ENCODE measurements at regions of chr2 and their contacts with region 1.

Region 1: GRCh38 chr2:181715033-181715630 is 34.8 kb upstream of the NEUROD1 start:
- DNase-seq: peak; percentile 70 to 74
- H3K4me3 ChIP-seq: no peak overlapping the region
- H3K27ac ChIP-seq: no peak overlapping the region
- H3K4me1 ChIP-seq: no peaks in the 10 kb centered on the region
- H3K27me3 ChIP-seq: no peaks in the 10 kb centered on the region
- CTCF ChIP-seq: peak; percentile 97

Region 2: DNA sequence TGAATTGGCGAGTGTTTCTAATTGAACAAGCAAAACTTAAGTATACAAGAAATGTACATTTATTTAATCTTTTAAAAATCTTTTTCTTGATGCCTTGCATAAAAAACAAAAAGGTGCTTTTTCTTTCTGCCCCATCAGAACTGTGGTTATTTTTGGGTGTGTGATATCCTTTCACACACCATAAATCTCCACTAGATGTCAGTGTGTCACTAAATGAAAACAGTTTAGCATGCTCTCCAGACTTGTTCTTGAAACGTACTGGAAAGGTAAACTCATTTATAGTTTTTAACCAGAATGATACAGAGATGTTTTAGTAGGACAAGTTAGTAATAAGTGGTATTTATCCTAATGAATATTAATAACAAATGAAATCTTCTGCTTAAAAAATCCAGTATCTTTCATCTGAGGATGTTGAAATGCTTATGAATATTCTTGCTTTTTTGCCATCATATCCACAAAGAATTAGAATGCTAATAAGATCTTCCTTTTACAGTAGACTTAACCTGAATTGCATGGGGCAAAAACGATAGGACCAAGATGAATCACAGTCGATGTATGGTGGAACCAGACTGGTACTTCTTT is 637.9 kb before region 1 on chr2:
- CTCF ChIA-PET with region 1: no interaction called
- POLR2A ChIA-PET with region 1: no interaction called
- intact Hi-C with region 1: loop called (anchors 1 kb)
- DNase-seq: peak in 1 of 2 experiments; percentile 63
- H3K4me3 ChIP-seq: no peak overlapping the region
- H3K27ac ChIP-seq: no peak overlapping the region
- H3K4me1 ChIP-seq: no peaks in the 10 kb centered on the region
- H3K27me3 ChIP-seq: no peaks in the 10 kb centered on the region
- CTCF ChIP-seq: peak; percentile 95

Region 3: DNA sequence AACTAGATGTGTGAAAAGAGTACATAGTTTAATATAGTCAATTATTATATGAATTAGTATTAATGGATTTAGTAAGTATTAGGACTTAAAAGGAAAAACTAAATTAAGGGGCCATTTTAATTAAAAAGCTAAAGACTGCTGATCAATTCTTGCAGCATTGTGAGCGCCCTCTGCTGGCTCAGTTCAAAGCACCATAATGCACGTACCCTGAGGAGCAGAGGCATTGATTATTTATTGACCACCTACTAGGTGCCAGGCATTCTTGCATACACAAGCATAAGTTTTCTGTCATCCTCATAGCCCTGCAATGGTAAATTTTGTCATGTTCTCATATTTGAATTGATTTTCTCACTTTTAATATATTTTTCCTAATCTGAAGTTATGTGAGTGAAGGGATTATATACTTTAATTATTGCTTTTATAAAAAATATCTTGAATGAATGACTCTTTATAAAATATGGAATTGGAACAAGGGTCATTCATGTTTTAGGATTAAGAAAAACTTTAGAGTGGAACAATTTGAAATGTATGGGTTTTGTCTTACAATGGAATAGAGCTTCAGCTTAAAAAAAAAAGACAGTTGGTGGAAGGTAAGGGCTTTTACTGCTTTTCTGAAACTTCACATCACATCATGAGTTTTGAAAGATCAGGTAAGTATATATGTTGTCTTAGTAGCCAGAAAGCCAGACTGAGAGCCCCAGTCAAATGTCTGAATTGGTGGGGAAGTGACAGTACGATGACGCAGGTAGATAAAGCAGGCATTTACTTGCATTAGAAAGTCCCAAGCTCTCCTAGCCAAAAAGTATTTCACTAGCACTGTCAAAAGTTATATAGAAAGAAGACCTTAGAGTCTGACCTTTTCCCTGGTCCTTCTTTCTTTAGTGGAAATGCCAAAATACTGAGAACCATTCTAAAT is 248.2 kb before region 1 on chr2:
- CTCF ChIA-PET with region 1: interaction called, 4 read pairs
- POLR2A ChIA-PET with region 1: no interaction called
- intact Hi-C with region 1: loop called (anchors 10 kb)
- DNase-seq: peak in 1 of 2 experiments; percentile 58
- H3K4me3 ChIP-seq: no peak overlapping the region
- H3K27ac ChIP-seq: no peak overlapping the region
- H3K4me1 ChIP-seq: no peaks in the 10 kb centered on the region
- H3K27me3 ChIP-seq: no peaks in the 10 kb centered on the region
- CTCF ChIP-seq: peak; percentile 99

Region 4: DNA sequence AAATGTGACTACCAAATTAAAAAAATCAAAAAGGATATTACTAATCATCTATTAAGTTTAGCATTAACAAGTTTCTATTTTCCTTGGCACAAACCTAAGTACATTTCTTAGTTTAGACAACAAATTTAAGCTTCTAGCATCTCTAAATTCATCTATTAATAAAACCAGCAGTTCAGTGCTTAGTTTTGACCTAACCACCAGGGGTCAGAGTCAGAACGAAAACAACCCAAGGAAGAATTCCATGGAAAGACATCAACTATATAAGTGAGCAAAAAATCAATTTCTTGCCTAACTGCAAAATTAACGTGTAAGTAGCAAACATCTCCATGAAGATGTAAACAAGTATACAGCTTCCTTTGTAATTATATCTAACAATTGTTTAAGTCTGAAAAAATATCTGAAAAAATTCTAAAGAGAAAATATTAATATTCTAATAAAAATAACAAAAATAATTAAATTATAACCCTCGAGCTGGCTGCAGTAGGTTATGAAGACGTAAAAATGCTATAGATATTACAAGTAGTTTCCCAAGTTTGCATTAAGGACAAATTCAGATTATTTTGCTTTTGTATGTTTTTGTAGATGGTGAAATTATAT is 141.9 kb before region 1 on chr2:
- CTCF ChIA-PET with region 1: interaction called, 30 read pairs
- POLR2A ChIA-PET with region 1: no interaction called
- intact Hi-C with region 1: loop called (anchors 1 kb)
- DNase-seq: peak; percentile 19 to 49
- H3K4me3 ChIP-seq: no peak overlapping the region
- H3K27ac ChIP-seq: no peak overlapping the region
- H3K4me1 ChIP-seq: no peaks in the 10 kb centered on the region
- H3K27me3 ChIP-seq: no peaks in the 10 kb centered on the region
- CTCF ChIP-seq: peak; percentile 86

Region 5: GRCh38 chr2:181672255-181673008 is 42.7 kb before region 1 on chr2:
- CTCF ChIA-PET with region 1: no interaction called
- POLR2A ChIA-PET with region 1: no interaction called
- intact Hi-C with region 1: no loop called
- DNase-seq: no peak
- H3K4me3 ChIP-seq: no peak overlapping the region
- H3K27ac ChIP-seq: no peak overlapping the region
- H3K4me1 ChIP-seq: no peaks in the 10 kb centered on the region
- H3K27me3 ChIP-seq: no peaks in the 10 kb centered on the region; the same call in 1 of the 2 replicates
- CTCF ChIP-seq: no peak

Region 6: DNA sequence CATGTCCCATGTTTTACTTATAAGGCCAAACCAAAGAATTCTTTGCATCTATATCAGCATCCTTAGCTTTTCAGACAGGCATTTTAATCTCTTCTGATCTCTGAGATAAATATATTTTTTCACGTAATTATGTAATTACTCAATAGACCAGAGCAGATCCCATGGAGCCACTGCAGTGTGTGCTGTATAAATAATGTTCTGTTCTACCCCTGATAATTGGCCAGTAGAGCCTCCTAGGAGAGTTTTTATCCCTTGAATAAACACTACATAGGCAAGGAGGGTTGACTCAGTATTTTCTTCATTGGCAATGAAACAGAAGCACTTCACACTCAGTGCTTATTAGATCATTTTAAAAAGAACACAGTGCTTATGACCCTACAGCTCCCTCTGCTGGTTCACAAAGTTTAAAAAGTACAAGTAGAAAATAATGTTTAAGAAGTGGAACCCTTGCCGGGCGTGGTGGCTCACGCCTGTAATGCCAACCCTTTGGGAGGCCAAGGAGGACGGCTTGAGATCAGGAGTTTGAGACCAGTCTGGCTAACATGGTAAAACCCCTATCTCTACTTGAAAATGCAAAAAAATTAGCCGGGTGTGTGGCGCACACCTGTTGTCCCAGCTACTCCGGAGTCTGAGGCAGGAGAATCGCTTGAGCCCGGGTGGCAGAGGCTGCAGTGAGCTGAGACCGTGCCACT is 362.5 kb after region 1 on chr2:
- CTCF ChIA-PET with region 1: interaction called, 9 read pairs
- POLR2A ChIA-PET with region 1: no interaction called
- intact Hi-C with region 1: loop called (anchors 1 kb)
- DNase-seq: peak; percentile 47 to 76
- H3K4me3 ChIP-seq: no peak overlapping the region
- H3K27ac ChIP-seq: no peak overlapping the region
- H3K4me1 ChIP-seq: 0 out of 2 replicates have a peak, but pooled peaks cover 4% of the 10 kb centered on the region
- H3K27me3 ChIP-seq: no peaks in the 10 kb centered on the region
- CTCF ChIP-seq: peak; percentile 98

Measured in PC-9 (cell line).